ENCODE measurements at regions of chr16 and their contacts with region 1.

Region 1: GRCh38 chr16:2513405-2514322 is at the start of gene ATP6V0C:
- DNase-seq: peak; percentile 88 to 94 (median 94)
- H3K4me3 ChIP-seq: peak within 1 kb of the TSS; percentile 87
- H3K4me3 Mint-ChIP-seq: peak within 1 kb of the TSS; percentile 90 to 97 (median 94)
- H3K27ac ChIP-seq: peak within 1 kb of the TSS; percentile 86
- H3K27ac Mint-ChIP-seq: peak within 1 kb of the TSS; percentile 95 to 99 (median 98)
- H3K4me1 ChIP-seq: peaks cover 49% of the 10 kb centered on the region
- H3K4me1 Mint-ChIP-seq: peaks cover 50 to 57% (median 51%) of the 10 kb centered on the region in 3 donors
- H3K27me3 ChIP-seq: no peaks in the 10 kb centered on the region
- H3K27me3 Mint-ChIP-seq: peaks cover 0 to 6% of the 10 kb centered on the region in 2 donors
- total RNA-seq, gene ATP6V0C: 154 to 157 TPM

Region 2: DNA sequence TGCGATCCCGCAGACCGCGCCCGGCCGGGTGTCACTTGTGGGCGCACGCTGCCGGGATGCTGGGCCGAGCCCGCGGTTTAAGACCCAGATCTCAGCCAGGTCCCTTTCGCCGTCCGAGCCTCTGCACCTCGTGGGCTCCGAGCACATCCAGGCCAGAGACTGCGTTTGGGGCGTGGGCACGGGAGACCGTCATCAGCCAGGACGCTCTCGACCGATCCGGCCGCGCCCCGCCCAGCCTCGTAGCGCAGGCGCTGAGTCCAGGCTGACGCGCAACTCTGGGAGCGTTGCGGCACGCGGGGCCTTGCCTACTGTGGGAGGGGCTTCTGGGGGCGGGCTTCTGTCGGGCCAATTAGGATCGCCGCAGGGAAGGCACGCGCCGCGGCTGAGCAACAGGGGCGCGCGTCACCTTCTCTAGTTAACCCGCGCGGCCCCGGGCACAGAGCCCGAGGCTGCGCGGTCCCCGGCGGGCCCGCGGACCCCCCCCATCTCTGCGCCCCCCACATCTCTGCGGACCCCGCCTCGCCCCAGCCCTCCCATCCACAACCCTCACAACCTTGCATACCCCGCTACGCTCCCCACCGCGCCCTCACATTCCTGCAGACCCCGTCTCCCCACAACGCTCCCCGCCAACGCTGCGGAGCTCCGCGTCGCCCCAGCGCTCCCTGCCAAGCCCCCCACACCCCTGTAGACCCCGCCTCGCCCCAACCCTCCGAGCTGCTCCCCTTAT is 18.3 kb after region 1 on chr16:
- CTCF ChIA-PET with region 1: interaction called, 10 read pairs
- POLR2A ChIA-PET with region 1: interaction called, 65 read pairs
- DNase-seq: peak; percentile 96 to 98 (median 97)
- H3K4me3 ChIP-seq: peak overlapping the region; percentile 98
- H3K4me3 Mint-ChIP-seq: peak overlapping the region; percentile 93 to 99 (median 95)
- H3K27ac ChIP-seq: peak overlapping the region; percentile 97
- H3K27ac Mint-ChIP-seq: peak overlapping the region; percentile 98 to 99 (median 99)
- H3K4me1 ChIP-seq: peaks cover 9% of the 10 kb centered on the region
- H3K4me1 Mint-ChIP-seq: peaks cover 14 to 29% (median 15%) of the 10 kb centered on the region in 3 donors
- H3K27me3 ChIP-seq: no peaks in the 10 kb centered on the region
- H3K27me3 Mint-ChIP-seq: peaks cover 0 to 2% of the 10 kb centered on the region in 2 donors

Region 3: GRCh38 chr16:2537453-2538379 is 24.1 kb after region 1 on chr16 and contains the start of gene PDPK1:
- CTCF ChIA-PET with region 1: interaction called, 10 read pairs
- POLR2A ChIA-PET with region 1: interaction called, 65 read pairs
- DNase-seq: peak; percentile 91 to 96 (median 95)
- H3K4me3 ChIP-seq: peak within 1 kb of the TSS; percentile 64
- H3K4me3 Mint-ChIP-seq: peak within 1 kb of the TSS; percentile 85 to 95 (median 87)
- H3K27ac ChIP-seq: peak within 1 kb of the TSS; percentile 61
- H3K27ac Mint-ChIP-seq: peak within 1 kb of the TSS; percentile 57 to 99 (median 90)
- H3K4me1 ChIP-seq: peaks cover 29% of the 10 kb centered on the region
- H3K4me1 Mint-ChIP-seq: peaks cover 39 to 49% (median 41%) of the 10 kb centered on the region in 3 donors
- H3K27me3 ChIP-seq: no peaks in the 10 kb centered on the region
- H3K27me3 Mint-ChIP-seq: peaks cover 0 to 2% of the 10 kb centered on the region in 2 donors
- total RNA-seq, gene PDPK1: 56.8 to 58.5 TPM

Measured in CD8-positive, alpha-beta memory T cell (primary cell).